Heart left ventricle (tissue), 16 donors: ENCODE measurements at regions of chr12 and their contacts with region 1.

Region 1: GRCh38 chr12:42568952-42569915 is 20.3 kb downstream of the PRICKLE1 start:
- DNase-seq: no peak
- ATAC-seq: peak in 3 of 4 donors; percentile 40 to 75 (median 66)
- H3K4me3 ChIP-seq: no peak overlapping the region
- H3K27ac ChIP-seq: no peak overlapping the region
- H3K4me1 ChIP-seq: peaks cover 0 to 41% (median 22%) of the 10 kb centered on the region in 12 donors
- H3K27me3 ChIP-seq: no peaks in the 10 kb centered on the region
- CTCF ChIP-seq: peak; percentile 48 to 80 (median 68)
- POLR2A ChIP-seq: no peak

Region 2: GRCh38 chr12:42372154-42372791 is 197.0 kb before region 1 on chr12:
- intact Hi-C with region 1: loop called in 2 of 10 experiments (anchors 5 to 10 kb)
- DNase-seq: peak in 1 of 5 donors; percentile 15
- ATAC-seq: peak in 3 of 4 donors; percentile 67 to 78 (median 71)
- H3K4me3 ChIP-seq: no peak overlapping the region
- H3K27ac ChIP-seq: no peak overlapping the region
- H3K4me1 ChIP-seq: no peaks in the 10 kb centered on the region
- H3K27me3 ChIP-seq: no peaks in the 10 kb centered on the region
- CTCF ChIP-seq: peak; percentile 60 to 81 (median 70)
- POLR2A ChIP-seq: no peak

Region 3: GRCh38 chr12:42382013-42382680 is 187.1 kb before region 1 on chr12:
- intact Hi-C with region 1: loop called in 3 of 10 experiments (anchors 5 to 10 kb)
- DNase-seq: no peak
- ATAC-seq: no peak
- H3K4me3 ChIP-seq: no peak overlapping the region
- H3K27ac ChIP-seq: no peak overlapping the region
- H3K4me1 ChIP-seq: peaks cover 0 to 16% (median 6%) of the 10 kb centered on the region in 12 donors
- H3K27me3 ChIP-seq: no peaks in the 10 kb centered on the region
- CTCF ChIP-seq: no peak
- POLR2A ChIP-seq: no peak

Region 4: DNA sequence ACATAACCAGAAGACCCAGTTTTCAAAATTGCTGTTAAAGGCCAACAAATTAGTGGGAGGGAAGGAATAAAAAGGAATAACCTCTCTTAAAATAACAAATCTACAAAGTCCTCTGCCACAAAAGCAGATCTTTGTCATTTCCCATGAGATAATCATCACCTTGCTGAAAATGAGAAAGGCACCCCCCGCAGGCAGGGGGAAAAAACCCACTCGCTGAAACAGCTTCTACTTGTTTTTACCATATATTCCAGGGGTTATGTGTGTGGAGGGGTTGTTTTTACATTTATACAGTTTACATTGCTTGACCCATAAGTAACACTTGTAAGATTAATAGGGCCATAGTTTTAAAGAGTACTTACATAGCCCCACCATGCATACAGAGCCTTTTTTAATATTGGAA is 110.7 kb before region 1 on chr12:
- intact Hi-C with region 1: no loop called
- DNase-seq: no peak
- ATAC-seq: no peak
- H3K4me3 ChIP-seq: no peak overlapping the region
- H3K27ac ChIP-seq: no peak overlapping the region
- H3K4me1 ChIP-seq: peaks cover 0 to 10% (median 6%) of the 10 kb centered on the region in 12 donors
- H3K27me3 ChIP-seq: no peaks in the 10 kb centered on the region
- CTCF ChIP-seq: no peak
- POLR2A ChIP-seq: no peak

Region 5: DNA sequence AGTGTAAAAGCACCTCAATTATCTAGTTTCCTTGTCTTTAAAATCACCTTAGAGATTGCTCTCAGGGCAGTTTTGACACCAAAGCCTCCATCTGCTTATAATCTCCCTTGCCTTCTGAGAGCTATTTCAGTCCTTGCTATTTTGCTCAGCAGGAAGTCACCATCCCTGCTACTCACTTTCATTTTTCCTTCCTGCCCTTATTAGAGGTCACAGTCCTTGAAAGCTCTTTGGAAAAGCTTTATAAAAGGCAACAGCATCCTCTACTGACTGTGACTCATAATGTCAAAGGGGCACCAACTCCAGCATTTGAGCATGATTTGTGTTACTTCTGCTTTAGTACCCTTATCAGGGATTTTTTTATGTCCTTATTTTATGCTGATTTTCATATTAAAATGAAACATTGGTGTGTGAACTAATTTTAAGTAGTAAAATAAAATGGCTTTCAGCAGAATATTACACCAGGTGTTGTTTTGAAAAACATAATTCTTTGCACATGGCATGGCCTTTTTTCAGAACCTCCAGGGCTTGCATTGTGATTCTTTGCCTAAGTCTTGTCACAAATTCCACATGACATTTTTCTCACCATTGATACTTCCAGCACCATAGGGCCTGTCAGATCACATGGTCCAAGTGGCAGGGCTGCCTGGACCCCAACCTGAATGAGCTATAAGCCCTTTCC is 769.8 kb after region 1 on chr12:
- intact Hi-C with region 1: loop called in 1 of 10 experiments (anchors 5 kb)
- DNase-seq: peak in 1 of 5 donors; percentile 22
- ATAC-seq: peak; percentile 74 to 99 (median 98)
- H3K4me3 ChIP-seq: no peak overlapping the region
- H3K27ac ChIP-seq: peak overlapping the region in 9 of 12 donors; percentile 12 to 58 (median 47)
- H3K4me1 ChIP-seq: peaks cover 0 to 16% (median 8%) of the 10 kb centered on the region in 12 donors
- H3K27me3 ChIP-seq: no peaks in the 10 kb centered on the region
- CTCF ChIP-seq: peak in 11 of 12 donors; percentile 47 to 83 (median 70)
- POLR2A ChIP-seq: no peak